Sigmoid colon (tissue), 7 donors: ENCODE measurements at regions of chr12 and their contacts with region 1.

Region 1: DNA sequence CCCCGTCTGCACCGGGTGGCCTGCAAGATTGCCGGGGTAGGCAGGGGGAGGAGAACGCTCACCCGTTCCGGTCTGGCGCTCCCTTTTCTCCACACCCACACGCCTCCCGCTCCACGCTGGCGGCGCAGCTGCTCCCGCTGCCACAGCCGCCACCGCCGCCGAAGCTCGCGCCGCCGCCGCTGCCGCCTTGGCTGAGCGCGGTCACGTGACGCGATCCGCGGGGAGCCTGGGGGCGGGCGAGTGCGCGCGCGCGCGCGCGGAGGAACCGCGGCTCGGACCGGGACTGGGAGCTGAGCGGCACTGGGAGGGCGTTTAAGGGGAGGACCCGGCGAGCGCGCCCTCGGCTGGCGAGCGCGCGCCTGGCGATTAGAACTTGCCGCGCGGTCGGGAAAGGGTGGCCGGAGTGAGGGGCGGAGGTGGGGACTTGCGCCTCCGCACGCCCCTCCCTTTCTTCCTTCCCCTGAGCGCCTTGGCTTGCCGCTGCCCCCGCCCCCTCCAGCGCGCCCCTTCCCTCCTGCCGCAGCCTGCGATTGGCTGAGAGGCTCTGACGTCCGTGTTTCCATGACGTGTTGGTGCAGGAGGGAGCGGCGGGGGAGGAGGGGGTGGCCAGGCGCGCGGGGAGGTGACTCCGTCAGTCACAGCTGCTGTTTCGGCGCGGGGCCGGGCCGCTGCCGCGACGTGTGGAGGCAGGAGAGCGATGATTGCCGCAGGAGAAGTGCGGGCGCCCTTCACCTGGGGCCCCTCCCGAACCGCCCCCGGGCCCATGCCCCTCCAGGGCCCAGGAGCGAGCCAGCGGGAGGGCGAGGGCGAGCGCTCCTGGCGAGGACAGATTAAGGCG is 738 bp upstream of the ATP2B1 start:
- DNase-seq: peak; percentile 100
- H3K4me3 ChIP-seq: peak overlapping the region; percentile 87 to 95 (median 90)
- H3K27ac ChIP-seq: peak overlapping the region; percentile 97 to 100 (median 98)
- H3K4me1 ChIP-seq: peaks cover 0 to 14% (median 11%) of the 10 kb centered on the region in 4 donors
- H3K27me3 ChIP-seq: no peaks in the 10 kb centered on the region
- CTCF ChIP-seq: no peak
- EP300 ChIP-seq: peak; percentile 54 to 91 (median 85)
- POLR2A ChIP-seq: peak; percentile 97 to 99

Region 2: DNA sequence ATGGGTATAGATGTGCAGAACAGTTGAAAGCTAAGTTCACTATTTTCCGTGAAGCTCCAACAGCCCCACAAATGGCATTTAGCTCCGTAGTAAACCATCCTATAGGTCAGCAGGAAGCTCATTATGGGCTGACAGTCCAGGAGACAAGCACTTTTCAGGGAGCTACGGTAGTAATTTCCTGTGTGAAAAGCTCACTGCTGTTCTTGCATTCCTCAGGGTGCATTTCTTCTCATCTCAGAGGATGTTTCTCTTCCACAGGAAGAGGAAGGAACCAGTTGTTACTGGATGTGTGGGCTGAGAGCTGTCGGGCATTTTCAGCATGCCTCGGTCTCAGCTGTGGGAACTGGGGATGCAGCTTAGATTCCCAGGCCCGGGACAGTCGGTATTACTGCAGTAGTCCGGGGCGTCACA is 257.5 kb before region 1 on chr12:
- intact Hi-C with region 1: loop called (anchors 10 kb)
- DNase-seq: peak; percentile 77
- H3K4me3 ChIP-seq: peak overlapping the region in 1 of 4 donors; percentile 8
- H3K27ac ChIP-seq: peak overlapping the region; percentile 75 to 88 (median 82)
- H3K4me1 ChIP-seq: peaks cover 0 to 55% (median 46%) of the 10 kb centered on the region in 4 donors
- H3K27me3 ChIP-seq: no peaks in the 10 kb centered on the region
- CTCF ChIP-seq: no peak
- EP300 ChIP-seq: no peak
- POLR2A ChIP-seq: no peak

Region 3: DNA sequence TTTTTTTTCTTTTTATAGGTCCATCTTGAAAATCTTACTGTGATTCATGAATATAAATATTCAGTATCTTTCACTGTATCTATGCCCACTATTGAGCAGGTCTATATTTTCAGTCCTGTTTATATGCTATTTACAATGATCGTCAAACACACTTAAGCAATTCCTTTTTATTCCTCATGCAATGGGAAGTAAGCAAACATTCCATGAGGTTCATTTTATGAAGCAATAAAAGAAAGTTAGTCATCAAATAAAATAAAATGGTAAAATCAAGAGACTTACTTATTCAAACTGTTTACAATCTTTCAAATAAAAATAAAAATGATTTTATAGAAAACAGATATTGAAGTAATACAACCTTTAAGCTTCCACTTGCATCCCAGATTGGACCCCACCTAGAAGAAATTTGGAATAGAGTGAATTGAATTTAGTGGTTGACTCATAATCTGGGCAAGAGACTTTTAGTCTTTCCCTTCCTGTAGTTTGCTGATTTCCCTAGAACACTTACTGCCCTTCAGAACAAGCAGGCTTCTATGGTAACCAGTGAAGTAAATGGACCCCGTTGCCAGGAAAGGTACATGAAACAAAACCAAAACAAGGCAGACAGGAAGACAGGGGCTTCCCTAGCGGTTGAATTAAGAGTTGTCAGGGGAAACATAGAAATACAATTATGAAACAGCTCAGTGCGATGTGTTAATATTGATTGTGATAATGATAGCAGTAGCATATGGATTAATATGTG is 240.2 kb after region 1 on chr12:
- intact Hi-C with region 1: loop called (anchors 5 kb)
- DNase-seq: no peak
- H3K4me3 ChIP-seq: no peak overlapping the region
- H3K27ac ChIP-seq: peak overlapping the region; percentile 45 to 66 (median 57)
- H3K4me1 ChIP-seq: peaks cover 0 to 49% (median 42%) of the 10 kb centered on the region in 4 donors
- H3K27me3 ChIP-seq: no peaks in the 10 kb centered on the region
- CTCF ChIP-seq: no peak
- EP300 ChIP-seq: no peak
- POLR2A ChIP-seq: no peak

Region 4: DNA sequence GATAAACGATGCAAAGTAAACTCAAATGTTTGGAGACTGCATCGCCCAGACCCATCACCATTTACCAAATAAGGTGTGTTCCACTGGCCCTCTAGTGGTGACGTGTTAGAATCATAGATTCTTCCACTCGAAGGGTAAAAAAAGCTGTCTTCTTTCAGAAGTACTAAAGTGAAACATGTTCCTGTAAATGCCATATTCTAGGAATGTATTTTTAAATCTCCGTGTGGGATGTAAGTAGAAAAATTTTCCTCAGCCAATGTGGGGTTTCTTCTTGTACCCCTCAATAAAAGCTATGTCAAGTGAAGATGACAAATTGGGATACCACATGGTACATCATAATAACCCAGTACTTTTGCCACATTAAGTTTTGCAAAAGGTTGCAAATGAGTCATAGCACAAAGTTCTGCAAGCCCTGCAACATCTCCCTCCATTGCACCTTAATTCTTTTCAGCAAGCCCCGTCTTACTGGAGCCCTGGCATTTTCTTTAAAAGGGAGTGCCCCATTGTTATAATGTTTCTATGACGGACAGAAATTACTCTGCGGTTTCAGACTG is 1144.8 kb after region 1 on chr12:
- intact Hi-C with region 1: loop called (anchors 10 kb)
- DNase-seq: no peak
- H3K4me3 ChIP-seq: no peak overlapping the region
- H3K27ac ChIP-seq: peak overlapping the region in 3 of 4 donors; percentile 3 to 46 (median 38)
- H3K4me1 ChIP-seq: peaks cover 0 to 44% (median 24%) of the 10 kb centered on the region in 4 donors
- H3K27me3 ChIP-seq: no peaks in the 10 kb centered on the region
- CTCF ChIP-seq: peak; percentile 28 to 64 (median 51)
- EP300 ChIP-seq: no peak
- POLR2A ChIP-seq: no peak